ENCODE measurements at regions of chr2 and their contacts with region 1.

Region 1: DNA sequence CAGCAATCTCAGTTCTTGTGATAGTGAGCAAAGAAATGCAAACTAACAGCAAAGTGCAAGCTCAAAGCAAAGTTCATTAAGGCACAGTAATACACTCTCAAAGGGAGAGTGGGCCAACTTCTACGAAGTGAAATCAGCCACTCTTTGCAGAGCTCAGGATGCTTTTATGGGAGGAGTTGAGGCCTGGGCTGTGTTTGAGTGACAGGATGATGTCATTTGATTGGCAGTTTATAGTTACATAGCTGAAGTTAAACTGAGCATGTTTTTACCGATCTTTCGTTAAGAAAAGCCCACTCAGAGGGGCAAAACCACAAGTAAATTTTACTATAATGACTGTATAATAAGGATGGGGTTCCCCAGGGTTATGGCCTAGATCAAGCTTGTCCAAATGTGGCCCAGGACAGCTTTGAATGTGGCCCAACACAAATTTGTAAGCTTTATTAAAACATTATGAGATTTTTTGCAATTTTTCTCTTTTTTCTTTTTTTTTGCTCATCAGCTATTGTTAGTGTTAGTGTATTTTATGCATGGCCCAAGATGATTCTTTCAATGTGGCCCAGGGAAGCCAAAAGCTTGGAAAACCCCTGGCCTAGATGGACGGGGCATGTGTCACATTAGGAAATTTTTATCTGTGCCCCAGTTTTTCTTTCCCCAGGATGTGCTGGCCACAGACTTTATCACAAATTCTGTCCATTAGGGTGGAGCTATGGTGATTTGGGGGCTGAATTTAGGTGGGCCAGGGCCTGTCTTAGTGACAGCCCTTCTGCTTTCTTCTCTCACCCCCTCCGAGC is 8.3 kb upstream of the DNAH7 start:
- DNase-seq: no peak
- ATAC-seq: no peak
- H3K4me3 Mint-ChIP-seq: no peak overlapping the region
- H3K27ac Mint-ChIP-seq: no peak overlapping the region
- H3K4me1 Mint-ChIP-seq: peaks cover 20% of the 10 kb centered on the region
- H3K27me3 Mint-ChIP-seq: no peaks in the 10 kb centered on the region

Region 2: GRCh38 chr2:196088203-196088602 is 11.2 kb after region 1 on chr2:
- CTCF ChIA-PET with region 1: interaction called, 18 read pairs
- POLR2A ChIA-PET with region 1: no interaction called
- DNase-seq: no peak
- ATAC-seq: no peak
- H3K4me3 Mint-ChIP-seq: no peak overlapping the region
- H3K27ac Mint-ChIP-seq: no peak overlapping the region
- H3K4me1 Mint-ChIP-seq: peaks cover 14% of the 10 kb centered on the region
- H3K27me3 Mint-ChIP-seq: no peaks in the 10 kb centered on the region

Region 3: GRCh38 chr2:196160101-196160500 is 83.1 kb after region 1 on chr2:
- CTCF ChIA-PET with region 1: interaction called, 13 read pairs
- POLR2A ChIA-PET with region 1: no interaction called
- DNase-seq: peak; percentile 88
- ATAC-seq: peak; percentile 35
- H3K4me3 Mint-ChIP-seq: peak overlapping the region; percentile 66
- H3K27ac Mint-ChIP-seq: peak overlapping the region; percentile 82
- H3K4me1 Mint-ChIP-seq: peaks cover 50% of the 10 kb centered on the region
- H3K27me3 Mint-ChIP-seq: no peaks in the 10 kb centered on the region

Region 4: DNA sequence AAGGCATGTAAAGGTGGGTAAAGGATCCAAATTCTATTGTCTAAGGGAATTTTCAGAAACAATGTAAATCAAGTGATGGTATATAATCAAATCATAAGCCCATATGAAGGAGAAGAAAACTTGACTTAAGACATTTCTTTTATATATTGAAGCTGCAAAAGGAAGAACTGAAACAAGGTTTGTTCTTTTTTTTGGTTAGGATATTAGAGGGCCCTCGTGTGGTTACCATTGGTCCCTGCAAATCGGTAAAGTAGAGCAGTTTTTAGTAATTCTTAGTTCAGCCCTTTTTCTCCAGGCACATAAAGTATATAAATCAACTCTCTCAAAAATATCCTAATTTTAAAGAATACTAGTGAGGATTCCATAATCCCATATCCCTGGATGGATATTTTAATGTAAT is 200.0 kb after region 1 on chr2:
- CTCF ChIA-PET with region 1: interaction called, 41 read pairs
- POLR2A ChIA-PET with region 1: no interaction called
- DNase-seq: peak; percentile 61
- ATAC-seq: no peak
- H3K4me3 Mint-ChIP-seq: peak overlapping the region; percentile 31
- H3K27ac Mint-ChIP-seq: peak overlapping the region; percentile 89
- H3K4me1 Mint-ChIP-seq: peaks cover 48% of the 10 kb centered on the region
- H3K27me3 Mint-ChIP-seq: no peaks in the 10 kb centered on the region

Region 5: DNA sequence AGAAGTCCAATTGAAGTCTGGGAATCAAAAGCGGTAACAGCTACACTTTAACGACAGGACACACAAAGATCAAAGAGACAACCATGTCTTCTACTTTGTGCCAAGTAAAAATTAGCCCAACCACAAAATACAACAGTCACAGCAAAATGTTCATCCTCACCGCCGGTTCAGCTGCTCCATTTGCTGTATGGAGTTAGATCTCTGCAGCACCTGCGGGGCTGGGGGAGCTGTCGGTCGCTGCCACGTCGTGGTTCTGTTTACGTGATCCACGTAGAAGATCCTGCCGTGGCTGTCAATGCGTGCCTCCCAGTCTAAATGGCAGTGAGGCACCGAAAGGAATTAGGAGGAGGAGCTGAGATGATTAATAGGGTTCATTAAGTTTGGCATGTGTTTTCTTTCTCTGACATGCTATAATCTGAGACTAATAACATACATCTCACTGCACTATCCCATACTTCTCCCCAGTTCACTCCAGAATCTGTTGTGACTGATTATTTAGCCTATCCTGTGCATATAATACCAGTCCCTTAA is 230.9 kb after region 1 on chr2:
- CTCF ChIA-PET with region 1: interaction called, 10 read pairs
- POLR2A ChIA-PET with region 1: no interaction called
- DNase-seq: no peak
- ATAC-seq: no peak
- H3K4me3 Mint-ChIP-seq: no peak overlapping the region
- H3K27ac Mint-ChIP-seq: no peak overlapping the region
- H3K4me1 Mint-ChIP-seq: no peaks in the 10 kb centered on the region
- H3K27me3 Mint-ChIP-seq: peaks cover 4% of the 10 kb centered on the region

Region 6: GRCh38 chr2:196337208-196337953 is 260.4 kb after region 1 on chr2:
- CTCF ChIA-PET with region 1: interaction called, 104 read pairs
- POLR2A ChIA-PET with region 1: no interaction called
- DNase-seq: peak; percentile 34
- ATAC-seq: peak; percentile 39
- H3K4me3 Mint-ChIP-seq: no peak overlapping the region
- H3K27ac Mint-ChIP-seq: no peak overlapping the region
- H3K4me1 Mint-ChIP-seq: peaks cover 4% of the 10 kb centered on the region
- H3K27me3 Mint-ChIP-seq: peaks cover 7% of the 10 kb centered on the region

Region 7: GRCh38 chr2:196453613-196454047 is 376.7 kb after region 1 on chr2:
- CTCF ChIA-PET with region 1: interaction called, 82 read pairs
- POLR2A ChIA-PET with region 1: no interaction called
- DNase-seq: peak; percentile 66
- ATAC-seq: peak; percentile 67
- H3K4me3 Mint-ChIP-seq: no peak overlapping the region
- H3K27ac Mint-ChIP-seq: no peak overlapping the region
- H3K4me1 Mint-ChIP-seq: peaks cover 5% of the 10 kb centered on the region
- H3K27me3 Mint-ChIP-seq: peaks cover 29% of the 10 kb centered on the region

Region 8: DNA sequence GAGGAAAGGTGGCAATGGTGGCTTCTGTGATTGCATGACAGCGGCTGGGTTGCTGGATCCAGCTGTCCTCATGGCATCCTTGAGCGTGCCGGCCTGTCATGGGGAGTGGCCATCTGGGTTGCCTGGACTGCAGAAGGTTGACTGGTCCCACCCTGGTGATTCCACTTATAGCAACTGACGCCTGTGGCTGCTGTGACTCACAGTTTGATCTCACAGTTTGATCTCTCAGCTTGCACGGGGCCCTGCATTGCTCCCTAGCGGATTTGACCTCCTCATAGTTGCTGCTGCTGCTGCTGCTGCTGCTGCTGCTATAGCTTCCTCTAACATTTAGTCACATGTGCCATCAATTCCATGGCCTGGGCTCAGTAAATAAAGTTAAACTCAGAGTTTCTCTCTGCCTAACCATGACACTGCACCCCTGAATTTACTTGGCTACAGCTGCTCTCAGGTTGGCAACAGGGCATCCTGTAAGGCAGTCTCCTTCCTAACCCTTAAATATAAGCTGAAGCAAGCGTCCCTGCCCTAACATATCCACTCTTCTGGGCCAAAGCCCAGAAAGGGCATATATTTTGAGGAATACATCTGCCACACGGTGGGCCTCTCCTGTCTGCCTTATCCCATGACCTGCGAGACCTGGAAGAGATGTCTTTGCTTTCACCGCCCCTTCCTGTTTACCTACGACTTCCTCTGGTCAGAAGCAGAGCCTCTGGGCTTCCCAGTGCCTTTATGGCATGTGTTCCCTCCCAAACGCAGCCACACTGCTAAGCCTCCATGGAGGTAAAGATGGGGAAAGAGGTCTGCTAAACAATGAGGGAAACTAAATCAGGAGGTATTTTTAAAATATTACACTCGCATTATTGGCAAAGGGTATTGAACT is 524.7 kb after region 1 on chr2:
- CTCF ChIA-PET with region 1: no interaction called
- POLR2A ChIA-PET with region 1: no interaction called
- DNase-seq: no peak
- ATAC-seq: no peak
- H3K4me3 Mint-ChIP-seq: no peak overlapping the region
- H3K27ac Mint-ChIP-seq: no peak overlapping the region
- H3K4me1 Mint-ChIP-seq: no peaks in the 10 kb centered on the region
- H3K27me3 Mint-ChIP-seq: peaks cover 11% of the 10 kb centered on the region